ENCODE measurements at regions of chr9 and their contacts with region 1.

Region 1: DNA sequence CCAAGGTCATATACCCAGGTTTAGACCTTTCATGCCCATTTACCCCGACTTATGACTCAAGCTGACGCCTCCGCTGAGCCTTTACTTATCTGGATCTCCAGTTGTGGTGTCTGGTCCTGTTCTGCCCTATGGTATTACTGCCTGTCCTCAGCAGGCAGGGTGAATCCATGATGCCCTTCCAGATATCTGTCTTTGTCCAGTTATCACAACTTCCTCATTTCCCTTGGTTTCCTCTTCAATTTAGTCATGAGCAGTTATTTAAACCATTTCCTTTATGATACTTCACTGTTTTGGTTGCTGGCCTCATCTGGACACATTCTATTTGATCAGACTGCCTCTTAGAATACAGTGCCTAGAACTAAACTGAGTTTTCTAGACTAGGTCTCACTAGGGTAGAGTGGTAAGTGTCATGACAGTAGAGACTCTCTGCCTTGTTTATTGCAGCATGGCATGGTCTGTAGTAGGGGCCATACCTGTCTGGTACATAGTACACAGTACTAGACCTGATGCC is 93.3 kb downstream of the MELK start:
- DNase-seq: peak in 1 of 2 experiments; percentile 22
- H3K4me3 ChIP-seq: no peak overlapping the region
- H3K27ac ChIP-seq: no peak overlapping the region
- H3K4me1 ChIP-seq: peaks cover 10% of the 10 kb centered on the region; the same call in 1 of the 2 replicates
- H3K27me3 ChIP-seq: no peaks in the 10 kb centered on the region
- CTCF ChIP-seq: no peak

Region 2: DNA sequence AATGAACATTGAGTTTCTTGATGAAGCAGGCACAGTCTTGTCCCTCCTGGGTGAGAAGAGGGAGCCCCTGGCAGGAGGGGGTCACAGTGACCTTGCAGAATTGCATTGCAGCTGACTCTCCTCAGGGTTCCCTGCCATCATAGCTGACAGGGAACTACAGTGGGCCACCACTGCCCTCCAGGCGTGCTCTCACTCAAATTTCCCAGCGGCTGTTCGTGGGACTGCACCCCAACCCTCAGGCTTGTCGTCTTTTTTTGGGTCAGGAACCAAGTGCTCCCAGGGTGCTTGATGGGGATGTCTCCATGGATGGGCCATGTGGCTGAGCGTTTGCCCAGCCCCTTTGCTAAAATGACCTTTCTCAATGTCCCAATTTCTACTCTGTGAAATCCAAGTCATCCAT is 122.6 kb after region 1 on chr9:
- CTCF ChIA-PET with region 1: no interaction called
- POLR2A ChIA-PET with region 1: no interaction called
- intact Hi-C with region 1: no loop called
- DNase-seq: peak in 1 of 2 experiments; percentile 5
- H3K4me3 ChIP-seq: no peak overlapping the region
- H3K27ac ChIP-seq: no peak overlapping the region
- H3K4me1 ChIP-seq: no peaks in the 10 kb centered on the region
- H3K27me3 ChIP-seq: peaks cover 13% of the 10 kb centered on the region; the same call in 1 of the 2 replicates
- CTCF ChIP-seq: peak; percentile 53

Region 3: DNA sequence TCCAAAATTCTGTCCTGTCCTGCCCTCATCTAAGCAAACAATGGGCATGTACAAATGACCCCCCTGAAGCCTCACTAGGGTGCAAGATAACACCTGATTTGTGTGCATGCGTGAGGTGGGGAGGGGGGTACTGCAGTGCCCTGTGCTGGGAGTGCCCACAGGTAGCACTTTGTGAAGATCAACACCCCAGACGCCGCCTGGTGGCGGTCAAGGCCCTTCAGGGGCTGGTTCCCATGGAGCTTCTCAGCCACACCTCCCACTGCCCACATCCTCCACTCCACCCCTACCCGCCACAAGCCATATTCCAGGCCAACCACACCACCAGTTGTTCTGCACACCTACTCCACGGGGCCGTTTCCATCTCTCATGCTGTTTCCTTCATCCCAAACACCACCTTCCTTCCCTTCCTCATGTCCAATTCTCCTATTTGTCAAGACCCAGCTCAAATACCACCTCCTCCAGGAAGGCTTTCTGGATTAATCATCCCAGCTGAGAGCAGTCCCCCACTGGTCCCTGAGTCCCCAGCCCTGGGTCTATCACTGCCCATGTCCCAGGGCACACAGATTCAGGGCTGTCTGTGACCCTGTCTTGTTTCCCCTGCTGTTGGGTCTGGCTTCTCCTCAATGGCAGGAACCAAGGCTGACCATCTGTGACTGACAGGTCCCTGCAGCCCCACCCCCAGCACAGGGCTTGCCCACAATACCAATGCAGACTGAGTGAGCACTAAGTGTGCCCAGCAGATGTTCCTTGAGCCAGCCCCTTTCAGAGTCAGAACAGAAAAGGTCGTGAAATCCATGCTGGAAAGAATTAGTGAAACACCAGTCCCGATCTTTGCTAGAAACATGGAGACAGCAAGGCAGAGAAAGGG is 189.7 kb after region 1 on chr9:
- CTCF ChIA-PET with region 1: interaction called, 18 read pairs
- POLR2A ChIA-PET with region 1: no interaction called
- intact Hi-C with region 1: no loop called
- DNase-seq: peak in 1 of 2 experiments; percentile 55
- H3K4me3 ChIP-seq: no peak overlapping the region
- H3K27ac ChIP-seq: no peak overlapping the region
- H3K4me1 ChIP-seq: no peaks in the 10 kb centered on the region
- H3K27me3 ChIP-seq: peaks cover 42% of the 10 kb centered on the region; the same call in 1 of the 2 replicates
- CTCF ChIP-seq: peak; percentile 32; the same call in 1 of the 2 replicates

Region 4: GRCh38 chr9:37422289-37423104 is 756.5 kb after region 1 on chr9 and contains the start of gene GRHPR:
- CTCF ChIA-PET with region 1: interaction called, 11 read pairs
- POLR2A ChIA-PET with region 1: no interaction called
- intact Hi-C with region 1: no loop called
- DNase-seq: peak; percentile 48 to 76
- H3K4me3 ChIP-seq: peak within 1 kb of the TSS; percentile 63
- H3K27ac ChIP-seq: peak within 1 kb of the TSS; percentile 50
- H3K4me1 ChIP-seq: peaks cover 21% of the 10 kb centered on the region; the same call in 1 of the 2 replicates
- H3K27me3 ChIP-seq: no peaks in the 10 kb centered on the region
- CTCF ChIP-seq: no peak
- total RNA-seq, gene GRHPR: 77.2 and 85.4 TPM in 2 replicates